ENCODE measurements at regions of chr12 and their contacts with region 1.

Region 1: GRCh38 chr12:65232476-65233077 is 45.9 kb upstream of the MSRB3 start:
- DNase-seq: no peak
- ATAC-seq: no peak
- H3K4me3 Mint-ChIP-seq: no peak overlapping the region
- H3K27ac Mint-ChIP-seq: no peak overlapping the region
- H3K4me1 Mint-ChIP-seq: peaks cover 8% of the 10 kb centered on the region
- H3K27me3 Mint-ChIP-seq: no peaks in the 10 kb centered on the region

Region 2: GRCh38 chr12:64801381-64801780 is 431.2 kb before region 1 on chr12:
- CTCF ChIA-PET with region 1: interaction called, 17 read pairs
- POLR2A ChIA-PET with region 1: no interaction called
- DNase-seq: no peak
- ATAC-seq: no peak
- H3K4me3 Mint-ChIP-seq: no peak overlapping the region
- H3K27ac Mint-ChIP-seq: no peak overlapping the region
- H3K4me1 Mint-ChIP-seq: peaks cover 2% of the 10 kb centered on the region
- H3K27me3 Mint-ChIP-seq: peaks cover 32% of the 10 kb centered on the region

Region 3: DNA sequence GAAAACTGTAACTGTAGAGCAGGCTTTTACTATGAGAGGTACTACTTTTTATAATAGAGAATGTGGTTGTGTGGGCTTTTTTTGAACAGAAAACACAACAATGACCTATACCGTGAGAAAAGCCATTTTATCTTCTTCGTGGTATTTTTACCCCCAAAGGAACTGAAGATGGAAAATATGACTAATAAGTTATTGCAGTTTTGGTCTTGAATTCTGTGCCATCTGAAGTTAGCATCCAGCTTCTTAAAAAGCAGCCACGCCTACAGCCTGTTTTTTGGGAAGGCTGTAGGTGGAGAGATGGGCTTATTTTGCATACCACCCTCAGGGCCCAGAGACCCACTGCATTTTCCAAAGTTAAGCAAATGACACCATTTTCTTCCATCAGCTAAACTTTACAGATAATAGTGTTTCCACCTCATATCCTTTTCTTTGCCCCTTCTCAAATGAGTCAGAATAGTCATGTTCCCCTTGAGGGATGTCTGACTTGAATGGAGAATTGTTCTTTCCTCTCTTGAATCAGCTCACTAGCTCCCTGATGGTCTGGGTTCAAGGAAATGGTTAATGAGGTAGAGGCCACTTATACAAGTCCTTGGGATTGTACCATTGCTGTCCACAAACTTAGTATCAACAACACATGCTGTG is 355.1 kb before region 1 on chr12:
- CTCF ChIA-PET with region 1: no interaction called
- POLR2A ChIA-PET with region 1: no interaction called
- DNase-seq: no peak
- ATAC-seq: no peak
- H3K4me3 Mint-ChIP-seq: no peak overlapping the region
- H3K27ac Mint-ChIP-seq: no peak overlapping the region
- H3K4me1 Mint-ChIP-seq: peaks cover 6% of the 10 kb centered on the region
- H3K27me3 Mint-ChIP-seq: no peaks in the 10 kb centered on the region

Region 4: GRCh38 chr12:64890873-64891468 is 341.6 kb before region 1 on chr12:
- CTCF ChIA-PET with region 1: interaction called, 11 read pairs
- POLR2A ChIA-PET with region 1: no interaction called
- DNase-seq: no peak
- ATAC-seq: peak; percentile 49
- H3K4me3 Mint-ChIP-seq: no peak overlapping the region
- H3K27ac Mint-ChIP-seq: no peak overlapping the region
- H3K4me1 Mint-ChIP-seq: no peaks in the 10 kb centered on the region
- H3K27me3 Mint-ChIP-seq: peaks cover 2% of the 10 kb centered on the region

Region 5: GRCh38 chr12:65121049-65121955 is 111.3 kb before region 1 on chr12 and contains the start of gene WIF1:
- CTCF ChIA-PET with region 1: interaction called, 16 read pairs
- POLR2A ChIA-PET with region 1: no interaction called
- DNase-seq: peak; percentile 31
- ATAC-seq: peak; percentile 79
- H3K4me3 Mint-ChIP-seq: peak within 1 kb of the TSS; percentile 26
- H3K27ac Mint-ChIP-seq: no peak within 1 kb of the TSS
- H3K4me1 Mint-ChIP-seq: peaks cover 6% of the 10 kb centered on the region
- H3K27me3 Mint-ChIP-seq: peaks cover 38% of the 10 kb centered on the region
- total RNA-seq, gene WIF1: not detected

Region 6: GRCh38 chr12:65156366-65156841 is 76.2 kb before region 1 on chr12:
- CTCF ChIA-PET with region 1: interaction called, 11 read pairs
- POLR2A ChIA-PET with region 1: no interaction called
- DNase-seq: peak; percentile 46
- ATAC-seq: peak; percentile 75
- H3K4me3 Mint-ChIP-seq: peak overlapping the region; percentile 46
- H3K27ac Mint-ChIP-seq: peak overlapping the region; percentile 79
- H3K4me1 Mint-ChIP-seq: peaks cover 17% of the 10 kb centered on the region
- H3K27me3 Mint-ChIP-seq: peaks cover 10% of the 10 kb centered on the region

Region 7: DNA sequence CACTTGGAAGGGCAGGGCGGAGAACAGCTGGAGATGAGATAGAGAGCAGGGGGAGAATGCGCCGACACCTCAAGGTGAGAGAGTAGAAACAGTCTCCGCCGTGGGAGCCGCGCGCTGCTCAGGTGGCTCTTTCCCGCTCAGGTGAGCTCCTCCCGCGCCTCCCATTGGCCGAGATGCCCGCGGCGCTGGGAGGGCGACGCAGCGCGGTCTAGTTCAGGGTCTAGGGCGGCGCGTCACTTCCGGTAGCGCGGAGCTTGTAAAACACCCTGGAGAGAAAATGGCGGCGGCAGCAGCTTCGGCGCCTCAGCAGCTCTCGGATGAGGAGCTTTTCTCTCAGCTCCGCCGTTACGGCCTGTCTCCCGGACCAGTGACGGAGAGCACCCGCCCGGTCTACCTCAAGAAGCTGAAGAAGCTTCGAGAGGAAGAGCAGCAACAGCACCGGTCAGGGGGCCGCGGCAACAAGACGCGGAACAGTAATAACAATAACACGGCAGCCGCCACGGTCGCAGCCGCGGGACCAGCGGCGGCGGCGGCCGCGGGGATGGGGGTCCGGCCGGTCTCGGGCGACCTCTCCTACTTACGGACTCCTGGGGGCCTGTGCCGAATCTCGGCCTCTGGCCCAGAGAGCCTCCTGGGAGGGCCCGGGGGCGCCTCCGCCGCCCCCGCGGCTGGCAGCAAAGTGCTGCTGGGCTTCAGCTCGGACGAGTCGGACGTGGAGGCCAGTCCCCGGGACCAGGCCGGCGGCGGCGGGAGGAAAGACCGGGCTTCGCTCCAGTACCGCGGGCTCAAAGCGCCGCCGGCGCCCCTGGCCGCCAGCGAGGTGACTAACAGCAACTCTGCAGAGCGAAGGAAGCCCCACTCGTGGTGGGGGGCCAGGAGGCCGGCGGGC is 63.0 kb before region 1 on chr12 and contains the start of gene LEMD3:
- CTCF ChIA-PET with region 1: interaction called, 44 read pairs
- POLR2A ChIA-PET with region 1: interaction called, 13 read pairs
- DNase-seq: peak; percentile 96
- ATAC-seq: peak; percentile 90
- H3K4me3 Mint-ChIP-seq: peak within 1 kb of the TSS; percentile 99
- H3K27ac Mint-ChIP-seq: peak within 1 kb of the TSS; percentile 97
- H3K4me1 Mint-ChIP-seq: peaks cover 27% of the 10 kb centered on the region
- H3K27me3 Mint-ChIP-seq: no peaks in the 10 kb centered on the region
- total RNA-seq, gene LEMD3: 35.9 to 36.1 TPM

Region 8: GRCh38 chr12:65217086-65217485 is 15.5 kb before region 1 on chr12:
- CTCF ChIA-PET with region 1: interaction called, 12 read pairs
- POLR2A ChIA-PET with region 1: no interaction called
- DNase-seq: no peak
- ATAC-seq: no peak
- H3K4me3 Mint-ChIP-seq: no peak overlapping the region
- H3K27ac Mint-ChIP-seq: no peak overlapping the region
- H3K4me1 Mint-ChIP-seq: peaks cover 4% of the 10 kb centered on the region
- H3K27me3 Mint-ChIP-seq: no peaks in the 10 kb centered on the region